CD8-positive, alpha-beta T cell (primary cell): ENCODE measurements at regions of chr17 and their contacts with region 1.

Region 1: GRCh38 chr17:28854457-28855350 is at the start of gene ERAL1:
- DNase-seq: peak; percentile 62 to 90 (median 84)
- ATAC-seq: peak; percentile 99
- H3K4me3 ChIP-seq: peak within 1 kb of the TSS; percentile 75 to 96
- H3K4me3 Mint-ChIP-seq: peak within 1 kb of the TSS; percentile 95
- H3K27ac ChIP-seq: peak within 1 kb of the TSS; percentile 61 to 74
- H3K27ac Mint-ChIP-seq: peak within 1 kb of the TSS; percentile 90
- H3K4me1 ChIP-seq: peaks cover 12% of the 10 kb centered on the region
- H3K4me1 Mint-ChIP-seq: peaks cover 18% of the 10 kb centered on the region
- H3K27me3 ChIP-seq: no peaks in the 10 kb centered on the region
- H3K27me3 Mint-ChIP-seq: no peaks in the 10 kb centered on the region
- CTCF ChIP-seq: no peak
- total RNA-seq, gene ERAL1: 20.0 to 21.2 TPM

Region 2: DNA sequence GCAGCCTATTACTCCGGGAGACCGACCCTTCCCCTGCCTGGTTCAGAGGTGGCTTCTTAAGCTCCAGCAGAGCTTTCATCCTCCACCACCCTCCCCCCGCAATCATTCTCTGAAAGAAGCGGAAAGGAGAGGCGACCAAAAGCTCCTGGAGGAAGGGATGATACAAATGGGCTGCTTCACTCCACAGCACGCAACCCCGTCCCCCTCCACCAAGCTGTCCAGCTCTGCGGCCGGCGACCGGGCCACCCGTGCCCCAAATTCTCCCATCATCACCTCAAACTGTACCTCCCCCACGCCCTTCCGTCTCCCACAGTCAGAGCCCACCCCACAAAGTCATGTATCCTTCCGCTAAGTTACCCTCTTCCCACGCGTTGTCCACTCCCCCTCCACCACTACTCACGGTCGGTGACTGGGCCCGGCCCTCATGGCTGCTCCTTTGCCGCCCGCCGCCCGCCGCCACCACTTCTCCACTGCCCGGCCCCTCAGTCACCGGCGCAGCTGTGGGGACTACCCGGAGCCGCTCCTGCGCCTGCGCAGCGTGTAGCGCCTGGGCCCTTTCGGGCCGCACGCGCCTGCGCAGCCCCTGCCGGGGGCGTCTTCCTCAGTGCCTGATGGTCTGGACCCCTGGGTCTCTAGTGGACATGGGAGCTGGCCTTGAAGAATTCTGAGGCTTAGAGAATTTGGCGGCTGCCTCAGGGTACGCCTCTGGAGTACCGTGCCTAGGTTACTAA is 12.3 kb before region 1 on chr17 and contains the start of gene FAM222B:
- CTCF ChIA-PET with region 1: interaction called, 3 read pairs
- POLR2A ChIA-PET with region 1: interaction called, 3 read pairs
- intact Hi-C with region 1: loop called (anchors 1 kb)
- DNase-seq: peak; percentile 68 to 94 (median 83)
- ATAC-seq: peak; percentile 98
- H3K4me3 ChIP-seq: peak within 1 kb of the TSS; percentile 62 to 91
- H3K4me3 Mint-ChIP-seq: peak within 1 kb of the TSS; percentile 97
- H3K27ac ChIP-seq: peak within 1 kb of the TSS; percentile 65 to 79
- H3K27ac Mint-ChIP-seq: peak within 1 kb of the TSS; percentile 94
- H3K4me1 ChIP-seq: peaks cover 16% of the 10 kb centered on the region
- H3K4me1 Mint-ChIP-seq: peaks cover 25% of the 10 kb centered on the region
- H3K27me3 ChIP-seq: no peaks in the 10 kb centered on the region
- H3K27me3 Mint-ChIP-seq: no peaks in the 10 kb centered on the region
- CTCF ChIP-seq: no peak
- total RNA-seq, gene FAM222B: 20.2 to 20.6 TPM

Region 3: GRCh38 chr17:28871056-28871579 is 16.4 kb after region 1 on chr17:
- CTCF ChIA-PET with region 1: interaction called, 6 read pairs
- POLR2A ChIA-PET with region 1: interaction called, 3 read pairs
- intact Hi-C with region 1: loop called in 1 of 2 experiments (anchors 1 kb)
- DNase-seq: peak in 8 of 9 experiments; percentile 21 to 71 (median 44)
- ATAC-seq: peak; percentile 97
- H3K4me3 ChIP-seq: no peak overlapping the region
- H3K4me3 Mint-ChIP-seq: peak overlapping the region; percentile 42
- H3K27ac ChIP-seq: peak overlapping the region; percentile 42 to 73
- H3K27ac Mint-ChIP-seq: peak overlapping the region; percentile 96
- H3K4me1 ChIP-seq: peaks cover 14% of the 10 kb centered on the region
- H3K4me1 Mint-ChIP-seq: peaks cover 14% of the 10 kb centered on the region
- H3K27me3 ChIP-seq: no peaks in the 10 kb centered on the region
- H3K27me3 Mint-ChIP-seq: no peaks in the 10 kb centered on the region
- CTCF ChIP-seq: no peak